ENCODE measurements at regions of chr19 and their contacts with region 1.

Region 1: DNA sequence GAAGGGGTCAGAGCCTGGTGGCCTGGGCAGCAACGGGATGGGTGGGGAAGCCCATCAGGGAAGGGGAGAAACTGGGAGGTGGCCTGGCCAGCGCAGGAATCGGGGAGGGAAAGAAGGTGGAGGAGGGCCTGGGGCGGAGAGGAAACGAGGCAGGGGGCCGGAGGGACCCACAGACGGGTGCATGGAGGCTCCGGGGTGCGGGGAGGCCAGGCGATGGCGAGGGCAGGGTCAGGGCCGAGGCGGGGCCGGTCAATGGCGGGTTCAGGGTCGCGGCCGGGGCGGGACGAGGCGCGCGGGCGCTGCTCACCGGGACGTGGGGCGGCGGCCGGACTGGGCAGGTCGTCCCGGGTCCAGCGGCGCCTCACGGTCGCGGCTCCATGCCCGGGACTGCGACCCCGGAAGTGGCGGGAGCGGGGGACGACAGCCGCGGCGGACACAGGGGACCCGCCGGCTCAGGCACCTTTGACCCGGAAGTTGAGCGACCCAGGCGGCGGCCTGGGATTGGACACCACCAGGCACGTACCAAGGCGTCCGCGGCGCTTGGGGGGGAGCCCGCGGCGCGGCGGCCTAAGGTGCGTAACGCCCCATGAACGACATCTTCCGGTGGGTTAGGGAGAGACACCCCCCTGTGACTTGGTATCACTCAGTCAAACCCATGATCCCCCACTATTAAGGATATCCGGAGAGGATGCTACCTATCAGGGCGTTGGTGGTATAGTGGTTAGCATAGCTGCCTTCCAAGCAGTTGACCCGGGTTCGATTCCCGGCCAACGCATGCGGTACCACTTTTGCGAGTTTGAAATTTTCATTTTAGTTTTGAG is at the start of gene DPP9:
- DNase-seq: peak; percentile 98
- ATAC-seq: peak; percentile 98
- total RNA-seq, gene DPP9: 52.7 TPM

Region 2: GRCh38 chr19:4415352-4415751 is 308.2 kb before region 1 on chr19:
- intact Hi-C with region 1: no loop called
- DNase-seq: no peak
- ATAC-seq: no peak

Region 3: DNA sequence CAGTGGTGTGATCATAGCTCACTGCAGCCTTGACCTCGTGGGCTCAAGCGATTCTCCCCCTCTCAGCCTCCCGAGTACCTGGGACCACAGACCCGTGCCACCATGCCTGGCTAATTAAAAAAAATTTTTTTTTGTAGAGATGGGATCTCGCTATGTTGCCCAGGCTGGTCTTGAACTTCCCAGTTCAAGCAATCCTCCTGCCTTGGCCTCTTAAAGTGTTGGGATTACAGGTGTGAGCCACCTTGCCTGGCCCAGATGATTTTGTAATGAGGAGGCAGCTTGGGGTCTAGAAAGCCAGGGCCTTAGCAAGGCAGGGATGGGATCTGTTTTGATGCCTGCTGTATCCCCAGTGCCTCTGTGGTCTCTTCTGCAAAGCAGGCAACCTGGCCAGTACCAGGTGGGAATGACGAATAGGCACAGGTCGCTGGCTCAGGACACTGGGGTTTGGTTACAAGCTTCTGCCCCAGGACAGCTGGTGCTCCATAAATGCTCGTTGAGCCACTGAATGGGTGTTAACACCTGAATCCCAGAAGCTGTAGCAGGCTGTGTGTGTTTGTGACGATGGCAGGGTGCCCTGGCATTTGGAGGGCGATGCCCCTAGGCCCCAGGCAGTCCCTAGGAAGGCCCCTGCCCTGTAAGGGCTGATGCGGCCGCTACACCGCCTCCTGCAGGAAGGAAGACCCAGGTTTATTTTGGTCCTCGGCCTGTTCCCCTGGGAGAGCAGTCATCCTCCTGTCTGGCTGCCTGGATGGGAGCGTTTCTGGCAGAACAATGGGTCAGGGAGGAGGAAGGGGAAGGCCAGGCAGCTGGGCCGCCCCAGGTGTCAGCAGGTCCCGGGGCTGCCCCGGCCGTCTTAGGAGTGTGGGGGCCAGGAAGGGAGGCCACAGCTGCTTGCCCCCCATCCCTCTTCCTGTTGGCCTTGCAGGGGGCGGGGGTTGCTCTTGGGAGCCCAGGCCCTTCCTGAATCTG is 75.6 kb before region 1 on chr19:
- intact Hi-C with region 1: loop called (anchors 5 kb)
- DNase-seq: peak; percentile 74
- ATAC-seq: peak; percentile 71

Region 4: DNA sequence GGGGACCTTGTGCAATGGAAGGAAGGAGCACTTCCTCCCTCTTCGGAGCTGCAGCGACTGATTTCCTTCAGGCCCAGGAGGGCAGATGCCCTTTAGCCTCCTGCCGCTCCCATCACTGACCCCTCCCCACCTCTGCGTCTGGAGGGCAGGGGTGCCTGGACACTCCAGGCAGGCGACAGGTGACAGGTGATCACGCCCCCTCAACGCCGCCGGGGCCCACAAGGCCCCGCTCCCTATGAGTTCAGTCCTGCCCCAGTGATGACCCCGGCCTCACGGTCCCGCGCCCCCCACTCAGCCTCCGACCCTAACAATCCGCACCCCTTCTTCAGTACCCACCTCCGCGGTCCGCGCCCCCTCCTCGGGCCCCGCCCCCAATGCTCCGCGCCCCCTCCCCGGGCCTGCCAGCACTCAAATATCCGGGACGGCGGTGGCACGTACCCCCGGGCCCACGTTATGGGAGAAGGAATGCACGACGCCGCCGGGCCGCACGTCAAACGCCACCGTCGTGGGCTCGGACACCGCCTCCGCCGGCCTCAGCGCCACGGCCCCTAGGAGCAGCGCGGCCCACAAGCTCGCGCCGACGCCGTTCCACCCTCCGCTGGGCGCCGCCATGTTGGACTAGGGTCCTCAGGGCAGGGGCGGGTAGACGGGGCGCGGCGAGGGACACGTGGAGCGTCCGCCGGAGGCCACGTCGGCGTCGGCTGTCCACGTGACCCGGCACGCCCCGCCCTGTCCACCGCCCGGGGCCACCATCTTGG is 53.7 kb before region 1 on chr19 and contains the start of gene MYDGF:
- intact Hi-C with region 1: loop called (anchors 1 kb)
- DNase-seq: peak; percentile 98
- ATAC-seq: peak; percentile 99
- total RNA-seq, gene MYDGF: 29.8 TPM

Region 5: GRCh38 chr19:4791170-4792018 is 67.8 kb after region 1 on chr19 and contains the start of gene FEM1A:
- intact Hi-C with region 1: loop called (anchors 2 kb)
- DNase-seq: peak; percentile 99
- ATAC-seq: peak; percentile 99
- total RNA-seq, gene FEM1A: 47.0 TPM

Measured in Right ventricle myocardium inferior (tissue), 1 donor.